Tibial artery (tissue), 4 donors: ENCODE measurements at regions of chr13 and their contacts with region 1.

Region 1: DNA sequence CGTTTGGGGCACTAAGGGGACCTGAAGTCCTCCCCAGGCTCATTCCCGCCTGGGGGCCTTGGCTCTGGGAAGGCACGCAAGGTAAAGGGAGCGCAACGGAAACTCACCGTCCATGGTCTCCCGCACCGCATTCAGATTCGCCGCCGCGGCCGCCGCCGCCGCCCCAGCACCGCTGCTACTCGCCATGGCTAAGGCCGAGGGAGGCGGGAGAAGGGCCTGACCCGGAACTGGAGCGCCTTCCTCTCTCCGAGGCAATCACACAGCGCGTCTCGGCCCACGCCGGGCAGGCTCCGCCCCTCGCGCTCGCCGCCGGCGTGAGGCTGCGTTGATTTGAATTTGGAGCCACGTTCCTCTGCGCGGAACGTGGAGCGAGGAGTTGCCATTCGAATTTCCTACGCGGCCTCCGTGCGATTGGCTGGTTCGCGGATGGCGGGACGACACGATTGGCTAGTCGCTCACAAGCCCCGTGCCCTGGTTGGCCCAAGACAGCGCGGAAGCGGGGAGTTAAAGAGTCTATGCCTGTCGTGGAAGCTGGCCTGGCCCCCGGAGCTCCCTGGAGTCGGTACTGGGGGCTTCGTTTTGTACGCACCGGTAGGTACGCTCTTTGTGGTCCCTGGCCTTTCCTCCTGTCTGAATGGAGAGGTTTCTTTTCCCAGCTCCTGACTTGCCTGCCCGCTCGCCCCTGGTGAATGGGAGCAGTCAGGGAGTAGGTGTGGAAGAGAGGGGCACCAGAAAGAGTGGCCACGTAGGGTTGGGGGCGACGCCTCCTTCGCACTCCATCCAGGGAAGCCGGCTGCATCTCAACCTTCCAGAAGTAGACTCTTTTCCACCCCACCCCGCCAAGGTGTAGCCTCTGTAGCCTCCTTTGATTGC is at the starts of genes BORA and MZT1:
- DNase-seq: peak; percentile 95 to 97
- H3K4me3 ChIP-seq: peak within 1 kb of the TSS; percentile 86 to 91
- H3K27ac ChIP-seq: peak within 1 kb of the TSS; percentile 63 to 73
- H3K4me1 ChIP-seq: peaks cover 0 to 22% (median 15%) of the 10 kb centered on the region in 4 donors
- H3K27me3 ChIP-seq: no peaks in the 10 kb centered on the region
- CTCF ChIP-seq: no peak

Region 2: GRCh38 chr13:72781451-72782439 is 54.1 kb after region 1 on chr13 and contains the starts of genes DIS3 and PIBF1:
- intact Hi-C with region 1: loop called (anchors 2 kb)
- DNase-seq: peak; percentile 97 to 98
- H3K4me3 ChIP-seq: peak within 1 kb of the TSS; percentile 86 to 93
- H3K27ac ChIP-seq: peak within 1 kb of the TSS; percentile 86 to 92
- H3K4me1 ChIP-seq: peaks cover 0 to 62% (median 23%) of the 10 kb centered on the region in 4 donors
- H3K27me3 ChIP-seq: no peaks in the 10 kb centered on the region
- CTCF ChIP-seq: no peak

Region 3: DNA sequence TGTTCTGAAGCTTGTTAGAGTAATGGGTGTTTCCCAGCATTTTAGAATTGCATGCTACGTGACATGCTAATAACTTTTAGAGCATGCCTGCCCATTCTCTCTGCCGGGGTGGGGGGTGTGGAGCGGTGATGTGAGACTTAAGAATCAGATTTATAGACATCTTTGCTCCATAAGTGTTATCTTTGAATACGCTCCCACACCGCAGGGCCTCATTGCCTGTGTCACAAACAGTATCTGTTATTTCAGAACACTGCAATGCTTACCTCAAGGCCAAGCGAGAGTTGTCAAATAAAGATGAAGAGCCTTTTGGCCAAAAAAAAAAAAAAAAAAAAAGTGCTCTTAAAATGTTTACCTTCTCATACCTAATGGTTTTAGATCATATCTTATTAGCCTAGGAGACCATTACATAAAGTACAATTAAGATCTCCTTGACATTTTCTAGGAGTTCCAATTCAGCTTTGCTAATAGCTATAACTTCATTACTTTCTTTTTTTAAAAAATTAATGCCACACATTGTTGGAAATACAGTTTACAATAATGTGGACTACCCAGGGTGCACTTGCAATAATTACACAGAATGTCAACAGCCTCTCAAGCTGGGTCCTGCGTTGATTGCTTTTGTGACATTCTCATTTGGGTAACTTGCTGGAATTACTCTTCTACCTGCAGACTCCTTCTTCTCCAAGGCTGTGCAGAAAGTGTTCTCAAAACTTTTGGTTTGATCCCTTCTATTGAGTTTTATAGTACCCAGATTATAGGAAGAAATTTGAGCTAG is 881.2 kb after region 1 on chr13:
- intact Hi-C with region 1: no loop called
- DNase-seq: no peak
- H3K4me3 ChIP-seq: no peak overlapping the region
- H3K27ac ChIP-seq: no peak overlapping the region
- H3K4me1 ChIP-seq: no peaks in the 10 kb centered on the region
- H3K27me3 ChIP-seq: no peaks in the 10 kb centered on the region
- CTCF ChIP-seq: no peak